Activated naive CD4-positive, alpha-beta T cell treated with anti-CD3 and anti-CD28 coated beads for 36 hours (primary cell): ENCODE measurements at regions of chr2 and their contacts with region 1.

Region 1: GRCh38 chr2:207317378-207317984 is 151.7 kb upstream of the KLF7 start:
- DNase-seq: no peak
- H3K4me3 Mint-ChIP-seq: no peak overlapping the region
- H3K27ac Mint-ChIP-seq: peak overlapping the region; percentile 25
- H3K4me1 Mint-ChIP-seq: peaks cover 9% of the 10 kb centered on the region
- H3K27me3 Mint-ChIP-seq: peaks cover 4% of the 10 kb centered on the region

Region 2: DNA sequence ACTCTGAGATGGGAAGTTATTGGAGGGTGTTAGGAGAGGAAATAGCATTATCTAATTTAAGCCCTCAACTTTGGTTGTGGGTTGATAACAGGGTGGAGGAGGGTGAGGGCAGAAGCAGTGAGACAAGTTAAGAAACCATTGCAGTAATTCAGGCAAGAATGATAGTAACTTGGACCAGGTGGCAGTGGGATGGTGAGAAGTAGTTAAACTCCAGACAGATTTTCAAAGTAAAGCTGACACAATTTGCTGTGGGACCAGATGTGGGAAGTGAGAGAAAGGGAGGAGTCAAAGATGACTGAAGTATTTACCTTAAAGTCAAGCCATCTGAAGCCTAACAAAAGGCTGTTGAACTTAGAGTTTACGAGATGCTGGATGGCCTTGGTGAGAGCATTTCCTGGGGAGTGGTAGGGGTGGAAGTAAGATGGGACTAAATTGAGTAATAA is 11.5 kb after region 1 on chr2:
- CTCF ChIA-PET with region 1: no interaction called
- intact Hi-C with region 1: loop called (anchors 1 kb)
- DNase-seq: peak; percentile 21
- H3K4me3 Mint-ChIP-seq: peak overlapping the region; percentile 27
- H3K27ac Mint-ChIP-seq: peak overlapping the region; percentile 62
- H3K4me1 Mint-ChIP-seq: peaks cover 52% of the 10 kb centered on the region
- H3K27me3 Mint-ChIP-seq: no peaks in the 10 kb centered on the region